Naive thymus-derived CD4-positive, alpha-beta T cell (primary cell): ENCODE measurements at regions of chrX and their contacts with region 1.

Region 1: DNA sequence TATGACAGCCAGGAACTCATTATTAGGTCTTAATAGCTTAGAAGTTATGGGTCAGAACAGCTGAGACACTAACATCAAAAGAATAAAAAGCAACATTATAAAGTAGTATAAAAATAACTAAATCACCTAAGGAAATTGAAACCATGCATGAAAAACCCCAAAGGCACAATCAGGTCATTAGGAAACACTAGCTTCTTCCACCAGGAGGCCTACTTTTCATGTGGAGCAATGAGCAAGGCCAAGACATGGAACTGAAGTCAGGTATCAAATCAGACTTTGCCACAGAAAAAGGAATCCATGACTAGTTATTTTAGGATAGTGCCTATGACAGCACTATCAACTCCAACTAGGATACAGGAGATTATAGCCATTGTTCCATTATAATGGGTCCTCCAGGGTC is 7.9 kb downstream of the HUWE1 start:
- DNase-seq: peak in 4 of 9 donors; percentile 6 to 19 (median 16)
- ATAC-seq: no peak
- H3K4me3 ChIP-seq: no peak overlapping the region
- H3K4me3 Mint-ChIP-seq: peak overlapping the region in 2 of 10 donors; percentile 9 to 39
- H3K27ac ChIP-seq: no peak overlapping the region
- H3K27ac Mint-ChIP-seq: peak overlapping the region in 4 of 9 donors; percentile 6 to 42 (median 22)
- H3K4me1 ChIP-seq: peaks cover 0 to 5% of the 10 kb centered on the region in 2 donors
- H3K4me1 Mint-ChIP-seq: peaks cover 16 to 73% (median 53%) of the 10 kb centered on the region in 7 donors
- H3K27me3 ChIP-seq: no peaks in the 10 kb centered on the region
- H3K27me3 Mint-ChIP-seq: no peaks in the 10 kb centered on the region

Region 2: DNA sequence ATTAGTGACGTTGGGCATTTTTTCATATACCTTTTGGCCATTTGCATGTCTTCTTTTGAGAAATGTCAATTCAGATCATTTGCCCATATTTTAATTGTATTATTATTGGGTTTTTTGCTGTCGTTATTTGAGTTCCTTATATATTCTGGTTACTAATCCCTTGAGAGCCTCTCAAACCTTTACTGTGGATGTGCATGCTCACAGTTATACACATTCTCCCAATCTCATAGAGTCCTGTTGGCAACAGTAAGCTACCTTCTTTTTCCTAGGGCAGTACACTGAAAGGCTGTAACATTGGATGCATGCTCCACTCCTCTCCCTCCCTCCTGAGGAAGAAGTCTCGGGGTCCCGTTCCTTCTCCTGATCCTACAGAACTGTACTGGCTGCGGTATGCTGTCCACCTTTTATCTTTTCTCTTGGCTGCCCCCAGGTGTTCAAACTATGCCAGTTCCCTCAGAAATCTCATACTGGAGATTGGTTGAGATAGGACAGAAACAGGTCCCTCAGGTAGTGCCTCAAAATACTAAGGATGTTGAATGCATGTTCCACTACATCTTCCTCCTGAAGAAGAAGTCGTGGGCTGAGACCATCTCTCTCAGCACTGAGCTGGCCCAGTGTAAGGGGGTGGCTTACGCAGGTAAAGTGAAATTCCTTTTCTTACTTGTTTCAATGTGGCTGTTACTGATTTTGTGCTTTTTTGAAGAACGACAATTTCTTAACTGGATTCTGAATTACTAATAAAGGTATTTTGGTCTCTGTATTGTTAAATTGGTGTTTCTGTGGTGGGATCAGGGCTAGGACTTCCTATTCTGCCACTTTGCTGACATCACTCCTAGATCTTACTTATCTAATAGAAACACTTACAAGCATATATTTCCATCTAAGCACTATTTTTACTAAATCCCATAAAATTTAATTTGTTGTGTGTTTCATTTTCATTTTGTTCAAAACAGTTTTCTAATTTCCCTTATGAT is 153.3 kb after region 1 on chrX:
- CTCF ChIA-PET with region 1: interaction called, 4 read pairs
- POLR2A ChIA-PET with region 1: interaction called, 4 read pairs
- intact Hi-C with region 1: loop called (anchors 1 kb)
- DNase-seq: peak in 8 of 9 donors; percentile 12 to 45 (median 32)
- ATAC-seq: peak; percentile 71
- H3K4me3 ChIP-seq: no peak overlapping the region
- H3K4me3 Mint-ChIP-seq: peak overlapping the region in 1 of 10 donors; percentile 56
- H3K27ac ChIP-seq: no peak overlapping the region
- H3K27ac Mint-ChIP-seq: no peak overlapping the region
- H3K4me1 ChIP-seq: no peaks in the 10 kb centered on the region
- H3K4me1 Mint-ChIP-seq: peaks cover 0 to 16% (median 4%) of the 10 kb centered on the region in 7 donors
- H3K27me3 ChIP-seq: no peaks in the 10 kb centered on the region
- H3K27me3 Mint-ChIP-seq: no peaks in the 10 kb centered on the region